Colonic mucosa (tissue), 4 donors: ENCODE measurements at regions of chr12 and their contacts with region 1.

Region 1: GRCh38 chr12:65977384-65977783 is 153.1 kb downstream of the HMGA2 start:
- DNase-seq: no peak
- H3K4me3 ChIP-seq: no peak overlapping the region
- H3K27ac ChIP-seq: no peak overlapping the region
- H3K4me1 ChIP-seq: no peaks in the 10 kb centered on the region
- H3K27me3 ChIP-seq: no peaks in the 10 kb centered on the region
- CTCF ChIP-seq: no peak

Region 2: DNA sequence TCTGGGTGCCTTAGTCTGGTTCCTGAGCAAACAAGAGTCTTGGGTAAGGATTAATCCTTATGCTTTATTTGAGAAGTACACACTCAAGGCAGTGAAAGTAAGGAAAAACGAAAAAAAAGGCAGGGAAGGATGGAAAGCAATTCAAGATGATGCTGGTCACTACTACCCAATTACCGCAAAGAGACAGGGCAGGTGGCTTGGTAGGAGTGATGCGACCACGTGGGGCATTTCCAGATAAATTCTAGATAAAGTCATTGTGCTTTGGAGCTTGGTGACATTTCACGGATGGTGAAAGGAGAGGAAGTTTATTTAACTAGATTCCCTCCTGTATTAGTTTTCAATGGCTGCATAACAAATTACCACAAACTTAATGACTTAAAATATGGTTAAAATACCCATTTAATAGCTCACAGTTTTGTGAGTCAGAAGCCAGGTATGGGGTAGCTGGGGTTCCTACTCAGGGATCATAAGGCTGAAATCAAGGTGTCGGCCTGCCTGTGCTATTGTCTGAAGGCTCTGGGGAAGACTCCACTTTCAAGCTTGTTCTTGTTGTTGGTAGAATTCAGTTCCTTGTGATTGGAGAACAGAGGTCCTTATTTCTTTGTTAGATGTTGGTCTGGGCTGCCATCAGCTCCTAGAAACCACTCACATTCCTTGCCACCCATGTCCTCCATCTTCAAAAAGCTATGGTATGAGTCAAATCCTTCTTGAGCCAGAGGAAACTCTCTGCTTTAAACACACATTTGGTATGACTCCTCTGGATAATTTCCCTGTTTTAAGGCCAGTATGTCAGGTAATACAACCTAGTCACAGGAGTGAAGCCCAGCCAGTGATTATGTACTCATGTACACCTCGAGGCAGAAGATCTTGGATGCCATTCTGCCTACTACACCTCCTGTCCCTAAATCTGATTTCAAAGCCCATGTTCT is 158.7 kb before region 1 on chr12:
- intact Hi-C with region 1: loop called (anchors 10 kb)
- DNase-seq: no peak
- H3K4me3 ChIP-seq: no peak overlapping the region
- H3K27ac ChIP-seq: no peak overlapping the region
- H3K4me1 ChIP-seq: no peaks in the 10 kb centered on the region
- H3K27me3 ChIP-seq: peaks cover under 1% of the 10 kb centered on the region
- CTCF ChIP-seq: no peak

Region 3: DNA sequence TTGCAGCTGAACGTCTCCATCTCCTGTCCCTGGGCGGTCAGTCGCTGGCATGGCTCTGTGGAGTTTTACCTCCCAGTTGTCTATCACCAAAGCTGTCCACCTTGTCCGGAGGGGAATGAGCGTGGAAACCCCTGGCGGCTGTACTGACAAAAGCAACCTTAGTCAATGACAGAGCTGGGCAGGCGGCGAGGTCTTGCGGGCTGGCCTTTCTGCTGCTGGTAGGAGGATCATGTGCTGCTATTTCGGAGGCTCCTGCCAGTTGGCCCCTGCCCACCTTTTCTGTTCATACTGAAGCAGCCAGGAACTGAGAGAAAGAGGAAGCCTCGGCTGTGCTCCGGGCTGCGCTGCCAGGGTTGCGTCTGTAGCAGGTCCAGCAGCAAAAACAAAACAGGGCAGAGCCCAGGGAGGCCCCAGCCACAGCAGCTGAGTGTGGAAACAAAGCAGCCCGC is 95.4 kb before region 1 on chr12:
- intact Hi-C with region 1: loop called (anchors 10 kb)
- DNase-seq: peak; percentile 39
- H3K4me3 ChIP-seq: peak overlapping the region; percentile 9
- H3K27ac ChIP-seq: no peak overlapping the region
- H3K4me1 ChIP-seq: peaks cover 3% of the 10 kb centered on the region
- H3K27me3 ChIP-seq: no peaks in the 10 kb centered on the region
- CTCF ChIP-seq: no peak

Region 4: DNA sequence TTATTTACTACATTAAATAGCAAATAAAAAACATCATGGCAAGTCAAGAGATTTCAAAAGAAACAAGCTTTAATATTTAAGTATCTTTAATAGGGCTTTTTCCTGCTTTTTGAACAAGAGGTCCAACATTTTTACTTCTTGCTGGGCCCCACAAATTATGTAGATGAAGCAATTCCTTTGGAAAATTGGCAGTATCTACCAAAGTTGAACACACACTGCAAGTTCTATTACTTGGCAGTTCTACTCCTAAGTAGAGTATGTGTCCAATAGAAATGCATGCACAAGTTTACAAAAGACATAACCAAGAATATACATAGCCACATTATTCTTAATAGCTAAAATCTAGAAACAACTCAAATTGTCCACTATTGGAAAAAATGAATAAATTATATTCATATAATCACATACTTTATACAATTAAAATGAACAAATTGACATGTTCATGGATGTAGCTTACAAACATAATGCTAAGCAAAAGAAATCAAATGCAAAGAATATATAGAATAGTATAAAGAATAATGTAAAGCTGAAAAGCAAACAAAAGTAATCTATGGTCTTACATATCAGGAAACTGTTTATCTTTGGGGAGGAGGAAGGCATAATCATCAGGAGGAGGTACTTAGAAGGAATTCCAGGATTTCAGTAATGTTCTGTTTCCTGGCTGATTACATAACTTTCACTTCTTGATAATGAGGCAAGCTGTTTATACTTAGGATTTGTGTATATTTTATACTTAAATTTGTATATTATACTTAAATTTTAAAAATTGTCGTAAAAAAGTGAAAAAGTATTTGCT is 198.9 kb after region 1 on chr12:
- intact Hi-C with region 1: no loop called
- DNase-seq: no peak
- H3K4me3 ChIP-seq: no peak overlapping the region
- H3K27ac ChIP-seq: no peak overlapping the region
- H3K4me1 ChIP-seq: no peaks in the 10 kb centered on the region
- H3K27me3 ChIP-seq: no peaks in the 10 kb centered on the region
- CTCF ChIP-seq: no peak